GM12878 (cell line): ENCODE measurements at regions of chr9 and their contacts with region 1.

Region 1: DNA sequence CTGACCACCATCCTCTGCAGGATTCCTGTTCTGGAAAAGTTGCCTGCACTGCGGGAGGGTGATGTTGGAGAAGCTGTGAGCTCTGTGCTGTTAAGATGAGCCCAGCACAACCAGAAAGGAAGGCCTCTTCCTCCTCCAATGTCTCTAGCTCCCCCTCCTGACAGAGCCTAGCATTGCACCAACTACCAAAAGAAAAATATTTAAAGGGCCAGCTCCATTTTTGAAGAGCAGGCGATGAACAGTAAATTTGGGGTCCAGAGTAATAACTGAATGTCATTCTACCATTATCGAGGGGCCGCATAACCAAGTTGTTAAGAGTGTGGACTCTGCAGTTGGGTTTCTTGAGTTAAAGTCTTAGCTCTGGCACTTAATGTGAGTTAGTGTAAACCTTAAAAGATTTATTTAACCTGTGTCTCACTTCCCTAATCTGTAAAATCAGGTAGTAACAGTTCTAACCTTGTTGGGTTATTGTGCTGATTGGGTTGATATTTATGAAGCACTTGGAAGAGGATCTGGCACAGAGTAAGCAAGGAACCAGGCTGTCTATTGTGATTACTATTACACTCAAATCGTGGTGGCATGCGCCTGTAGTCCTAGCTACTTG is 3.9 kb downstream of the TEX53 start:
- DNase-seq: peak; percentile 43
- ATAC-seq: peak; percentile 92
- H3K4me3 ChIP-seq: no peak overlapping the region
- H3K27ac ChIP-seq: 0 out of 2 replicates have a peak overlapping the region, but pooled peaks have one; percentile 25
- H3K4me1 ChIP-seq: peaks cover 7% of the 10 kb centered on the region
- H3K27me3 ChIP-seq: no peaks in the 10 kb centered on the region
- CTCF ChIP-seq: peak; percentile 89 to 99 (median 95); a peak in 5 of 6 replicates
- EP300 ChIP-seq: no peak
- POLR2A ChIP-seq: peak; percentile 47; the same call in 1 of the 2 replicates
- RAD21 ChIP-seq: peak; percentile 99

Region 2: GRCh38 chr9:114339130-114339908 is 314.3 kb before region 1 on chr9:
- CTCF ChIA-PET with region 1: interaction called, 20 read pairs
- POLR2A ChIA-PET with region 1: no interaction called
- RAD21 ChIA-PET with region 1: interaction called, 14 read pairs
- SMC1A ChIA-PET with region 1: interaction called, 12 read pairs
- in situ Hi-C with region 1: no loop called
- intact Hi-C with region 1: loop called (anchors 5 kb)
- DNase-seq: peak; percentile 46
- ATAC-seq: peak; percentile 96
- H3K4me3 ChIP-seq: no peak overlapping the region
- H3K27ac ChIP-seq: no peak overlapping the region
- H3K4me1 ChIP-seq: peaks cover 6% of the 10 kb centered on the region; the same call in 1 of the 2 replicates
- H3K27me3 ChIP-seq: no peaks in the 10 kb centered on the region
- CTCF ChIP-seq: peak; percentile 89 to 96 (median 90); a peak in 5 of 6 replicates
- EP300 ChIP-seq: 0 out of 4 replicates have a peak, but pooled peaks of 1 of the 2 experiments have one; percentile 35
- POLR2A ChIP-seq: no peak; the same call in 1 of the 2 replicates
- RAD21 ChIP-seq: peak; percentile 75

Region 3: GRCh38 chr9:114434878-114435311 is 218.8 kb before region 1 on chr9:
- CTCF ChIA-PET with region 1: interaction called, 104 read pairs
- POLR2A ChIA-PET with region 1: no interaction called
- RAD21 ChIA-PET with region 1: interaction called, 49 read pairs
- SMC1A ChIA-PET with region 1: interaction called, 67 read pairs
- in situ Hi-C with region 1: no loop called
- intact Hi-C with region 1: loop called (anchors 1 kb)
- DNase-seq: no peak
- ATAC-seq: peak; percentile 77
- H3K4me3 ChIP-seq: no peak overlapping the region
- H3K27ac ChIP-seq: no peak overlapping the region
- H3K4me1 ChIP-seq: no peaks in the 10 kb centered on the region
- H3K27me3 ChIP-seq: peaks cover 0 to 4% of the 10 kb centered on the region in 2 experiments; a peak in 1 of 4 replicates
- CTCF ChIP-seq: peak; percentile 58 to 75 (median 71)
- EP300 ChIP-seq: no peak
- POLR2A ChIP-seq: no peak
- RAD21 ChIP-seq: peak; percentile 91

Region 4: GRCh38 chr9:114505187-114506081 is 148.2 kb before region 1 on chr9 and contains the start of gene WHRN:
- CTCF ChIA-PET with region 1: interaction called, 105 read pairs
- POLR2A ChIA-PET with region 1: interaction called, 4 read pairs
- RAD21 ChIA-PET with region 1: interaction called, 116 read pairs
- SMC1A ChIA-PET with region 1: interaction called, 80 read pairs
- in situ Hi-C with region 1: no loop called
- intact Hi-C with region 1: no loop called
- DNase-seq: no peak
- ATAC-seq: peak; percentile 85
- H3K4me3 ChIP-seq: peak within 1 kb of the TSS; percentile 64; the same call in 1 of the 2 replicates
- H3K27ac ChIP-seq: no peak within 1 kb of the TSS
- H3K4me1 ChIP-seq: 0 out of 2 replicates have a peak, but pooled peaks cover 3% of the 10 kb centered on the region
- H3K27me3 ChIP-seq: peaks cover 2 to 9% of the 10 kb centered on the region in 2 experiments
- CTCF ChIP-seq: no peak
- EP300 ChIP-seq: no peak
- POLR2A ChIP-seq: peak; percentile 59; the same call in 1 of the 2 replicates
- RAD21 ChIP-seq: no peak
- polyA plus RNA-seq, gene WHRN: 0.04 TPM in 1 of 2 experiments, not detected in the other

Region 5: DNA sequence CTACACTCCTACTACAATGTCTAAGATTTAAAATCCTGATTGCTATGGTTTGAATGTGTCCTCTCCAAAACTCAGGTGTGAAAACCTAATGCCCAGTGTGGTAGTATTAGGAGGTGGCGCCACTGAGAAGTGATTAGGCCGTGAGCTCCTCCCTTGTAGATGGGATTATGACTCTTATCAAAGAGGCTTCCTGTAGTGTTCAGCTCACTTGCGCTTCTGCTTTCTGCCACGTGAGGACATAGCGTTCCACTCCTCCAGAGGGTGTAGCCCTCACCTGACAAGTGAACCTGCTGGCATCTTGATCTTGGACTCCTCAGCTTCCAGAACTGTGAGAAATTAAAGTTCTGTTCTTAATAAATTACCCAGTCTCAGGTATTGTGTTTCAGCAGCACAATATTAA is 115.4 kb before region 1 on chr9:
- CTCF ChIA-PET with region 1: interaction called, 32 read pairs
- POLR2A ChIA-PET with region 1: no interaction called
- RAD21 ChIA-PET with region 1: interaction called, 25 read pairs
- SMC1A ChIA-PET with region 1: interaction called, 34 read pairs
- in situ Hi-C with region 1: no loop called
- intact Hi-C with region 1: loop called (anchors 1 kb)
- DNase-seq: peak; percentile 7
- ATAC-seq: peak; percentile 95
- H3K4me3 ChIP-seq: no peak overlapping the region
- H3K27ac ChIP-seq: no peak overlapping the region
- H3K4me1 ChIP-seq: no peaks in the 10 kb centered on the region; the same call in 1 of the 2 replicates
- H3K27me3 ChIP-seq: peaks cover 0 to 2% of the 10 kb centered on the region in 2 experiments; a peak in 2 of 4 replicates
- CTCF ChIP-seq: peak; percentile 31 to 52 (median 49); a peak in 5 of 6 replicates
- EP300 ChIP-seq: no peak
- POLR2A ChIP-seq: no peak
- RAD21 ChIP-seq: peak; percentile 48

Region 6: DNA sequence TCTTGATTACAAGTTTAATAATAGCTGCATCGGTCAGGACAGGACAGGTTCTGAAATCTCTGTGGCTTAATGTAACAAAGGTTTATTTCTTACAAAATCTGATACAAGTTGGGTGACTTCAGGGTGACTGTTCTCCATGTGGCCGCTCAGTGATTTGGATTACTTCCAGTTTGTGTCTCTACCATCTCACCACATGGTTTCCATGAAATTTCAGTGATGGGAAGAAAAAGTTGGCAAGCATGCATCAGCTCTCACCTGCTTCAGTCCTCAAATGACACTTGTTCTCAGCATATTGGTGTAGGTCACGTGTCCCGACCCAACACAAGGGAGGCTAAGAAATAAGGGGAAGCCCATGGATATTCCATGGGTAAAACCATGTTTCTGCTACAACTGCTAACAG is 50.4 kb before region 1 on chr9:
- CTCF ChIA-PET with region 1: interaction called, 61 read pairs
- POLR2A ChIA-PET with region 1: interaction called, 9 read pairs
- RAD21 ChIA-PET with region 1: interaction called, 49 read pairs
- SMC1A ChIA-PET with region 1: interaction called, 23 read pairs
- in situ Hi-C with region 1: no loop called
- intact Hi-C with region 1: no loop called
- DNase-seq: no peak
- ATAC-seq: no peak
- H3K4me3 ChIP-seq: no peak overlapping the region
- H3K27ac ChIP-seq: no peak overlapping the region; the same call in 1 of the 2 replicates
- H3K4me1 ChIP-seq: peaks cover 50% of the 10 kb centered on the region
- H3K27me3 ChIP-seq: no peaks in the 10 kb centered on the region
- CTCF ChIP-seq: no peak
- EP300 ChIP-seq: no peak
- POLR2A ChIP-seq: no peak
- RAD21 ChIP-seq: no peak

Region 7: DNA sequence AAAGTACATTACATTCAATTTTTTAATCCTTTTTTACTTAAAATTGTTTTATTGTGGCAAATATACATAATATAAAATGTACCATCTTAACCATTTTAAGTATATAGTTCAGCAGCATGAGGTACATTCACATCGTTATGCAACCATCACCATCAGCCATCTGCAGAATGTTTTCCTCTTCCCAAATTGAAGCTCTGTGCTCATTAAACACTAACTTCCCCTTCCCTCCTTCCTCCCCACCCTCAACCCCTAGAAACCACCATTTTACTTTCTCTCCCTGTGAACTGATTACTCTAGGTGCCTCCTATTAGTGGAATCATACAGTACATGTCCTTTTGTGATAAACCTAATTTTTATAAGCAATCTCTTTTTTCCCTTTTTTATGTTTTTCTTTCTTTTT is 11.7 kb before region 1 on chr9:
- CTCF ChIA-PET with region 1: interaction called, 11 read pairs
- POLR2A ChIA-PET with region 1: no interaction called
- RAD21 ChIA-PET with region 1: interaction called, 5 read pairs
- SMC1A ChIA-PET with region 1: interaction called, 16 read pairs
- in situ Hi-C with region 1: no loop called
- intact Hi-C with region 1: no loop called
- DNase-seq: no peak
- ATAC-seq: no peak
- H3K4me3 ChIP-seq: no peak overlapping the region
- H3K27ac ChIP-seq: no peak overlapping the region
- H3K4me1 ChIP-seq: no peaks in the 10 kb centered on the region
- H3K27me3 ChIP-seq: no peaks in the 10 kb centered on the region
- CTCF ChIP-seq: no peak
- EP300 ChIP-seq: no peak
- POLR2A ChIP-seq: no peak
- RAD21 ChIP-seq: no peak

Region 8: DNA sequence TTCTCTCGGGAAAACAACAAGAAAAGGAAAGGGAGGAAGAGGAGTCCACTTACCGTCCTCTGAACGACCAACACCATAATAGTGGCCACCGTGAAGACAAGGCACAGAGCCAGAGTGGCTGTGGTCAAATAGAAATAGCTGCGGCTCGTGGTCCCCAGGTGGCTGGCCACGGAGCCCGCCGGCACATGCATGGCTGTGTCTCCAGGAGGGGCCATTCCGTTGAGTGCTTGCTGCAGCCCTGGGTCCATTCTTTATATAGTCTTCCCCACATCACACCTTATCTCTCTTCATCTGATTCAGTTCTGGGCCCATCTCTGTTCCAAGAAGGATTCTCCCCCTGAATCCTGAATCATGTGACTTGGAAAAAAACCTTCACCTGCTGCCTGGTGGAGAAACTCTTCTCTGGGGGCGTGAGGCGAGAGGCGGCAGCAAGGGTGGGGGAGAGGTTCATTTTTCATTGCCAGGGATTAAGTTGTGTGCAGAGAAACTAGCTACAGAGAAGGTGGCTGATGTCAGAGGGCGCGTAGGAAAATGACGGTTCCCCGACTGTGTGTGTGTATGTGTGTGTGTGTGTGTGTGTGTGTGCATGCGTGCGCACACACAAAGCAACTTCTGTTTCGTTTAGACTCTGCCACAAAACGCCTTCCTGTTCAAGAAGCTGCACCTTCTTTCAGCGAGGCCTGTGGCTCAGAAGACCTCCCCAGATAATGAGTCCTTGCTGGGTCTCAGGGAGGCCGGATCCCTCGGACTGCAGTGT is 276.6 kb after region 1 on chr9 and contains the start of gene TNFSF8:
- CTCF ChIA-PET with region 1: no interaction called
- POLR2A ChIA-PET with region 1: no interaction called
- RAD21 ChIA-PET with region 1: no interaction called
- SMC1A ChIA-PET with region 1: no interaction called
- in situ Hi-C with region 1: no loop called
- intact Hi-C with region 1: no loop called
- DNase-seq: no peak
- ATAC-seq: peak; percentile 64
- H3K4me3 ChIP-seq: no peak within 1 kb of the TSS
- H3K27ac ChIP-seq: no peak within 1 kb of the TSS
- H3K4me1 ChIP-seq: peaks cover 5% of the 10 kb centered on the region; the same call in 1 of the 2 replicates
- H3K27me3 ChIP-seq: peaks cover 6 to 22% of the 10 kb centered on the region in 2 experiments
- CTCF ChIP-seq: no peak
- EP300 ChIP-seq: no peak
- POLR2A ChIP-seq: no peak
- RAD21 ChIP-seq: no peak
- polyA plus RNA-seq, gene TNFSF8: 0.29 TPM in 1 of 2 experiments, not detected in the other